SK-N-SH (cell line): ENCODE measurements at regions of chr6 and their contacts with region 1.

Region 1: GRCh38 chr6:34145161-34146020 is 496 bp downstream of the GRM4 start:
- DNase-seq: peak; percentile 78
- H3K4me3 ChIP-seq: peak overlapping the region; percentile 42 to 56
- H3K27ac ChIP-seq: no peak overlapping the region
- H3K4me1 ChIP-seq: peaks cover 0 to 20% of the 10 kb centered on the region in 2 experiments; a peak in 2 of 4 replicates
- H3K27me3 ChIP-seq: peaks cover 67% of the 10 kb centered on the region
- CTCF ChIP-seq: no peak
- EP300 ChIP-seq: no peak
- RAD21 ChIP-seq: no peak

Region 2: DNA sequence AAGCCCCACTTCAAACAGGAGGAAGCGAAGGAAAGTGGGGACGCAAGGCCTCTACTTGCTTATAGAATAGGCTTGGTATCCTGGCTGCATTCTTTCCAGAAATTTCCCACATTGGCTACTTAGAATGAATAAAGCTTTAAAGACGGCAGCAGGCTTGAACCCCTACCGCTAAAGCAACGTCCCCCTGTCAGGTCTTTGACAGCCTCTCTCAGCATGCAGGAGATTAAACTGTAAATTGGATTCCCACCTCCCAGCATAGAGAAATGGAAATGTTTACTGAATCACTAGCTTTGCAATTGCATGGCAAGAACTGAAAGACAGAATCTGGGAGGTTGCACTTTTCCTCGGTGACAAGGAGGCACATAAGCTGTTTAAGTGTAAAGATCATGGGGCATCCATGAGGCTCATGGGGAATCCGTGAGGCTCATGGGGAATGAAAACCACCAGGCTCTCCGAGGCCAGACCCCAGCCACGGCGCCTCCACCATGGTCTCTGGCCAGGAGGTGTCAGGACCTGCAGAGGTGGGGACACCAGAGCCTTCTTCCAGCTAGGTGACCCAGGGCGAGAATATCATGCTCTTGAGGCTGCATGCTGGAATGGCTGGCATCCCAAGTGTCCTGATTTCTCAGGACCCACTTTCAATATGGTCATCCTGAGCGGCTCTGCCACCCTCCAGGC is 366.8 kb before region 1 on chr6:
- CTCF ChIA-PET with region 1: no interaction called
- POLR2A ChIA-PET with region 1: no interaction called
- DNase-seq: no peak
- H3K4me3 ChIP-seq: no peak overlapping the region
- H3K27ac ChIP-seq: no peak overlapping the region
- H3K4me1 ChIP-seq: peaks cover 13 to 25% of the 10 kb centered on the region in 2 experiments
- H3K27me3 ChIP-seq: no peaks in the 10 kb centered on the region
- CTCF ChIP-seq: no peak
- EP300 ChIP-seq: no peak
- RAD21 ChIP-seq: no peak

Region 3: GRCh38 chr6:34115403-34115795 is 30.0 kb before region 1 on chr6:
- CTCF ChIA-PET with region 1: interaction called, 17 read pairs
- POLR2A ChIA-PET with region 1: no interaction called
- DNase-seq: no peak
- H3K4me3 ChIP-seq: no peak overlapping the region
- H3K27ac ChIP-seq: no peak overlapping the region
- H3K4me1 ChIP-seq: peaks cover 0 to 4% of the 10 kb centered on the region in 2 experiments; a peak in 1 of 4 replicates
- H3K27me3 ChIP-seq: no peaks in the 10 kb centered on the region; the same call in 1 of the 2 replicates
- CTCF ChIP-seq: no peak
- EP300 ChIP-seq: no peak
- RAD21 ChIP-seq: no peak

Region 4: GRCh38 chr6:34132486-34133185 is 12.8 kb before region 1 on chr6:
- CTCF ChIA-PET with region 1: interaction called, 10 read pairs
- POLR2A ChIA-PET with region 1: no interaction called
- DNase-seq: no peak
- H3K4me3 ChIP-seq: no peak overlapping the region
- H3K27ac ChIP-seq: no peak overlapping the region
- H3K4me1 ChIP-seq: peaks cover 0 to 3% of the 10 kb centered on the region in 2 experiments; a peak in 1 of 4 replicates
- H3K27me3 ChIP-seq: peaks cover 5% of the 10 kb centered on the region; the same call in 1 of the 2 replicates
- CTCF ChIP-seq: no peak
- EP300 ChIP-seq: no peak
- RAD21 ChIP-seq: no peak